Heart right ventricle (tissue), 16 donors: ENCODE measurements at regions of chr1 and their contacts with region 1.

Region 1: DNA sequence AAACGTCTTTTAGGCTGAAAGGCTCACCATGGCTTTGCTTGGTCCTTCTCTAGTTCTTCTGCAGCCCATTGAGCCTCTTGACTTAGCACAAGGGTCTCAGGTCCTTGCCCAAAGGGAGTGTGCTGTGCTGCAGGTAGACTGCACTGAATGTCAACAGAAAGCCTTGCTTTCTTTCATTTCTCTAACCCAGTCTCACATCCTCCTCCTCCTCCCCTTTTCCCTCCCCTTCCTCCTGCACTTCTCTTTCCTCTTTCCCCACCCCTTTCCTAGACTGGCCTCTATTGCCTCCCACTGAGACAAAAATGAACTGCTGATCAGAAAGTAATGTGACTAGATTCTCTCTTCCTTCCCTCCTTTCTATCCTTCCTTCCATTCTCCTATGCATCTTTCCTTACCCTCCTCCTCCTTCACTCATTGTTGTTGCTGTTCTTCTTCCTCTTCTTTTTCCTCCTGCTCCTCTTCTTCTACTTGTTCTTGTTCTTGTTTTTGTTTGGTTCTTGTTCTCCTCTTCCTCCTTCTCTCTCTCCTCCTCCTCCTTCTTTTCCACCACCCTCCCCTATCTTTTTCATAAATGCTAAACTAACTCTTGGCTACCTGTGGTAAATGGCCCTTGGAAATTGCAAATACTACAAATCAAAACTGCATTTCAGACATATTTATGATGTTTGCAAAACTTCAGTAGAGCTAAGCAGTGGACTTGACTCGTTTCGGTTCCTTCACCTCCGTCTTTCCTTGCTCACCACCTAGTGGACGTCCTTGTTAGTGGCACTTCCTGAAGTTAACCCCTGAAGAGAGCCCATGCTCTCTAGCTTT is at the start of gene SELL:
- DNase-seq: peak in 1 of 2 donors; percentile 71
- ATAC-seq: peak; percentile 72 to 95 (median 90)
- H3K4me3 ChIP-seq: peak within 1 kb of the TSS in 8 of 10 donors; percentile 6 to 45 (median 30)
- H3K27ac ChIP-seq: peak within 1 kb of the TSS in 1 of 10 donors; percentile 75
- H3K4me1 ChIP-seq: peaks cover 0 to 22% (median 0%) of the 10 kb centered on the region in 9 donors
- H3K27me3 ChIP-seq: peaks cover 0 to 15% (median 4%) of the 10 kb centered on the region in 7 donors
- CTCF ChIP-seq: peak; percentile 64 to 83 (median 75)
- total RNA-seq, gene SELL: 1.3 to 8.5 (median 1.7) TPM

Region 2: GRCh38 chr1:169586395-169587255 is 125.0 kb before region 1 on chr1 and contains the start of gene F5:
- intact Hi-C with region 1: loop called in 1 of 10 experiments (anchors 5 kb)
- DNase-seq: peak; percentile 64 to 72
- ATAC-seq: peak; percentile 94 to 98 (median 98)
- H3K4me3 ChIP-seq: peak within 1 kb of the TSS; percentile 22 to 51 (median 32)
- H3K27ac ChIP-seq: peak within 1 kb of the TSS in 9 of 10 donors; percentile 12 to 85 (median 57)
- H3K4me1 ChIP-seq: peaks cover 0 to 27% (median 10%) of the 10 kb centered on the region in 9 donors
- H3K27me3 ChIP-seq: peaks cover 0 to 32% (median 6%) of the 10 kb centered on the region in 7 donors
- CTCF ChIP-seq: peak in 8 of 9 donors; percentile 11 to 65 (median 54)
- total RNA-seq, gene F5: 0.94 to 31.4 (median 6.9) TPM

Region 3: GRCh38 chr1:169601093-169601881 is 110.4 kb before region 1 on chr1:
- intact Hi-C with region 1: loop called in 9 of 10 experiments (anchors 1 to 10 kb)
- DNase-seq: no peak
- ATAC-seq: peak in 3 of 8 donors; percentile 51 to 56 (median 53)
- H3K4me3 ChIP-seq: no peak overlapping the region
- H3K27ac ChIP-seq: no peak overlapping the region
- H3K4me1 ChIP-seq: peaks cover 0 to 36% (median 0%) of the 10 kb centered on the region in 9 donors
- H3K27me3 ChIP-seq: peaks cover 0 to 32% (median 3%) of the 10 kb centered on the region in 7 donors
- CTCF ChIP-seq: peak; percentile 8 to 69 (median 50)